Heart right ventricle (tissue), 16 donors: ENCODE measurements at regions of chr1 and their contacts with region 1.

Region 1: GRCh38 chr1:201614262-201615015 is 75.5 kb downstream of the NAV1 start:
- DNase-seq: peak; percentile 49 to 51
- ATAC-seq: peak; percentile 67 to 89 (median 84)
- H3K4me3 ChIP-seq: peak overlapping the region in 3 of 10 donors; percentile 11 to 22 (median 12)
- H3K27ac ChIP-seq: no peak overlapping the region
- H3K4me1 ChIP-seq: peaks cover 2 to 33% (median 21%) of the 10 kb centered on the region in 9 donors
- H3K27me3 ChIP-seq: no peaks in the 10 kb centered on the region
- CTCF ChIP-seq: no peak

Region 2: GRCh38 chr1:201254625-201255506 is 359.6 kb before region 1 on chr1:
- intact Hi-C with region 1: no loop called
- DNase-seq: peak; percentile 52 to 70
- ATAC-seq: peak; percentile 64 to 85 (median 78)
- H3K4me3 ChIP-seq: no peak overlapping the region
- H3K27ac ChIP-seq: no peak overlapping the region
- H3K4me1 ChIP-seq: peaks cover 1 to 7% (median 5%) of the 10 kb centered on the region in 9 donors
- H3K27me3 ChIP-seq: peaks cover 0 to 10% (median 6%) of the 10 kb centered on the region in 7 donors
- CTCF ChIP-seq: peak; percentile 87 to 99 (median 95)

Region 3: DNA sequence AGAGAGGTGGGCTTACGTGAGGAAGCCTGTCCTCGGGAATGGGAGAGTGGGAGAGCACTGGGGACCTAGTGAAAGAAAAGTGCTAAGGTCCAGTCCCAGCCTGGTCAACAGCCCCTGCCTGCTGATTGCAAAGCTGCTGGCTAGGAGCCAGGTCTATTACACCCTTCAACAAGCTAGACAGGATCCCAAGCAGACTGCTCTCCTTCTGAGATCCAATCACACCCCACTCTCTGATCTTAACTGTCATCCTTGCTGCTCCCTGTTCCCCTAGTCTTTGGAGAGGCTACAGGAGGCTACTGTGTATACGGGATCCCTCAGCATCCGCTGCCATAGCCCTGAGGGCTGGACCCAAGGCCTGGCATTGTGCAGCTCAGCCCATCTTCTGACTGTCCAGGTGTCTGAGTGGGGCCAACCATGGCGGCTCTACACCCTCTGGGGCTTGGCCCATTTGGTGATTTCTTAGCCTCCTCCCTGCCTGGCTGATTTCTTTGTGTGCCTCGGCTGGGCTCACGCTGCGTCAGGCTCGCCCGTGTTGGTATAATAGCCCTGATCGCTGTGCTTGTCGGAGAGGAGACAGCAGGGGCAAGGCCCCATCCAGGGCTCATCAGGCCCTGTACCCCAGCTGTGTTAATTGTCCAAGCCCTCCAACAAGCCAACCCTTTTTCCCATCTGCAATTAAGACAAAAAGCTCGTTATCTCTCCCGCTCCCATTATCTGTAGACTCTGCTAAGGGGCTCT is 31.6 kb before region 1 on chr1:
- intact Hi-C with region 1: loop called in 1 of 10 experiments (anchors 5 kb)
- DNase-seq: no peak
- ATAC-seq: peak in 6 of 8 donors; percentile 22 to 52 (median 34)
- H3K4me3 ChIP-seq: no peak overlapping the region
- H3K27ac ChIP-seq: peak overlapping the region in 3 of 10 donors; percentile 10 to 57 (median 31)
- H3K4me1 ChIP-seq: peaks cover 0 to 48% (median 36%) of the 10 kb centered on the region in 9 donors
- H3K27me3 ChIP-seq: no peaks in the 10 kb centered on the region
- CTCF ChIP-seq: no peak

Region 4: GRCh38 chr1:201660931-201661822 is 46.7 kb after region 1 on chr1:
- intact Hi-C with region 1: loop called in 1 of 10 experiments (anchors 5 kb)
- DNase-seq: no peak
- ATAC-seq: no peak
- H3K4me3 ChIP-seq: no peak overlapping the region
- H3K27ac ChIP-seq: no peak overlapping the region
- H3K4me1 ChIP-seq: peaks cover 10 to 86% (median 49%) of the 10 kb centered on the region in 9 donors
- H3K27me3 ChIP-seq: no peaks in the 10 kb centered on the region
- CTCF ChIP-seq: no peak